ENCODE measurements at regions of chr5 and their contacts with region 1.

Region 1: DNA sequence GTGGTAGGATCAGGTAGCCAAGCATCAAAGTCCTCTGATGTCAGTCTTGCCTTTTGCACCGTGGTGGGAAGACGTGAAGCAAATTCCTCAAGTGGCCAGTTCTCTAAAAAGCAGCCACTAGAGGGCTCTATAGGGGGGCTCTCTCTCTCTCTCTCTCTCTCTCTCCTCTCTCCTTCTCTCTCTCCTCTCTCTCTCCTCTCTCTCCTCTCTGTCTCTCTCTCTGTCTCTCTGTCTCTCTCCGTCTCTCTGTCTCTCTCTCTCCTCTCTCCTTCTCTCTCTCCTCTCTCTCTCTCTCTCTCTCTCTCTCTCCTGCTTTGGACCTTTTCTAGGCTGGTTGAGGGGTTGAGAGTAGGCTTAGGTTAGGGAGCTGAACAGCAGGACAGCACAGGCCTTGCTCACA is 13.9 kb upstream of the OSMR start:
- DNase-seq: no peak
- ATAC-seq: peak in 5 of 8 donors; percentile 12 to 53 (median 39)
- H3K4me3 ChIP-seq: no peak overlapping the region
- H3K27ac ChIP-seq: no peak overlapping the region
- H3K4me1 ChIP-seq: peaks cover 2 to 24% (median 12%) of the 10 kb centered on the region in 9 donors
- H3K27me3 ChIP-seq: no peaks in the 10 kb centered on the region
- CTCF ChIP-seq: peak in 8 of 9 donors; percentile 9 to 57 (median 44)

Region 2: DNA sequence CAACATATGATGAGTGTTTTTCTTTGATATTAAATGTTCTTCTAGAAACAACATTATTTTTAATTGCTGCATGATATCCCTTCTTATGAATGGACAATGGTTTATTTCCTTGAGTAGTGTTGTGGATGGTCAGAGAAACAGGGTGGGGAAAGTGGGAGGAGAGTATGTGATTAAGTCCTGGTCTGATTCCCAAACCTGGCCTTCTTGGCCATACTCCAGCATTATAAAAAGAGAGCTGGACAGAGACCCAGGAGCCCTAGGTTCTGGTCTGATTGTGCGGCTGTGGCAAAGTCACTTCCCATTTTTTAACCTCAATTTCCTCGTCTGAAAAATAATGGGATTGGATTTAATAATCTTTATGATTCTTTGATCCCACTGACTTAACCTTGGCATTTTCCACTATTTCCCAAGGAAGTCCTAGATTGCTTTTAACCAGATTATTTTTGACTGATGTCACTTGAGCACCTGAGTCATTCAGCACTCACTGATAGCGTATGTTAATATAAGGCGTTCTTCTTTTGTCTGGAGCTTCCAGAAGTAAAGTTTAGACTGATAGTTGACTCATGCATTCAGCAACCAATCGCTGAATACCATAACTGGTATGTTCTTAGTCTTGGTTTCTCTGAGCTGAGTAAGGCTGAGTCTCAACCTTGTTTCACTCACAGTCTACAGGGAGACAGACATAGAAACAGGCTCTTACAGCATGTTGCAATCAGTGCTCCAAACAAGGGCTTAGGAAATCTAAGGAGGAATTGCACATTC is 40.1 kb after region 1 on chr5:
- intact Hi-C with region 1: loop called in 1 of 10 experiments (anchors 5 kb)
- DNase-seq: peak in 1 of 2 donors; percentile 25
- ATAC-seq: peak in 7 of 8 donors; percentile 55 to 93 (median 86)
- H3K4me3 ChIP-seq: no peak overlapping the region
- H3K27ac ChIP-seq: peak overlapping the region in 2 of 10 donors; percentile 32
- H3K4me1 ChIP-seq: peaks cover 0 to 29% (median 14%) of the 10 kb centered on the region in 9 donors
- H3K27me3 ChIP-seq: peaks cover 0 to 3% (median 0%) of the 10 kb centered on the region in 7 donors
- CTCF ChIP-seq: no peak

Region 3: DNA sequence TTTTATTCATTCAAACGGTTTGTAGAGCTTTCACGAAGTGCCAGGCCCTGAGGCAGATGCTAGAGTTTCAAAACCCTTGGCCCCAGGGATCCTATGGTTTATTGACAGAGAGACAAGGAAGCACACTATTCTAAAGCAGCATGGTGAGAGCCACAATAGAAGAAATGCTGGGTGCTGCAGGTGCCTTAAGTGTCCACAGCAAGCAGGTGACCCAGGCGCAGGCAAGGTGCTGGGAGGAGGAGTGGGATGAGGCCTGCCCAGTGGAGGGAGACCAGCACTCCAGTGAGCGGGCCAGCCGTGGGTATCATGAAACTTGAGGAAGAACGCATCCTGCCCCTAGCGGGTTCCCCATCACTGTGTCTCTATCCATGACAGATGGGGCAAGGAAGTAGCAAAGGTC is 84.9 kb after region 1 on chr5:
- intact Hi-C with region 1: loop called in 8 of 10 experiments (anchors 5 to 10 kb)
- DNase-seq: no peak
- ATAC-seq: no peak
- H3K4me3 ChIP-seq: no peak overlapping the region
- H3K27ac ChIP-seq: no peak overlapping the region
- H3K4me1 ChIP-seq: no peaks in the 10 kb centered on the region
- H3K27me3 ChIP-seq: no peaks in the 10 kb centered on the region
- CTCF ChIP-seq: no peak

Region 4: DNA sequence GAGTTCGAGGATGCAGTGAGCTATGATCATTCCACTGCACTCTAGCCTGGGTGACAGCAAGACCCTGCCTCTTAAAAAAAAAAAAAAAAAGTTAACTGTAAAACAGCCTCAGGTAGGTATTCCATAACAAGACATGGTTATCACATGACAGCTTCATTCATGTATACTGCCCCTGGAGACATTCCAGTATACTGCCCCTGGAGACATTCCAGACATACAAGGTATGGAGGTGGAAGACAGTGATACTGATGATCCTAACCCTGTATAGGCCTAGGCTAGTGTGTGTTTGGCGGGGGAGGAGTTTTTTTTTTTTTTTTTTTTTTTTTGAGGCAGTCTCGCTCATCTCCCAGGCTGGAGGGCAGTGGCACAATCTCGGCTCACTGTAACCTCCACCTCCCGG is 136.8 kb after region 1 on chr5:
- intact Hi-C with region 1: no loop called
- DNase-seq: no peak
- ATAC-seq: no peak
- H3K4me3 ChIP-seq: no peak overlapping the region
- H3K27ac ChIP-seq: no peak overlapping the region
- H3K4me1 ChIP-seq: no peaks in the 10 kb centered on the region
- H3K27me3 ChIP-seq: no peaks in the 10 kb centered on the region
- CTCF ChIP-seq: no peak

Measured in heart right ventricle (tissue), 16 donors.